Heart right ventricle (tissue), 16 donors: ENCODE measurements at regions of chr10 and their contacts with region 1.

Region 1: DNA sequence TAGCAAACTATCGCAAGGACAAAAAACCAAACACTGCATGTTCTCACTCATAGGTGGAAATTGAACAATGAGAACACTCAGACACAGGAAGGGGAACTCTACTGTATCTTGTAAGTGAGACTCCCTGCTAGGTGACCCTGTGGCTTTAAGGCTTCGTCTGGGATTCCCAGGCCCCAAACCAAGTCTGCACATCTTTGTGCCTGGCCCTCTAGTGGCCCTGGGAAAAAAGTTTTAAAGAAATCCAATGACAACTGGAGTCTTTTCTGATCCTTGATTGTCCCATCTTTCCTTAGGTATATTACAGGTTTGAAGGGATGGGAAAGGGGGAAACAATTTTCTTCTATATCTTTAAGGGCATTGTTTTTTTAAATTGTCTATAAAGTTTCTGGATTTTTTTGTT is 10.6 kb upstream of the LIPM start:
- DNase-seq: no peak
- ATAC-seq: no peak
- H3K4me3 ChIP-seq: no peak overlapping the region
- H3K27ac ChIP-seq: peak overlapping the region in 1 of 10 donors; percentile 57
- H3K4me1 ChIP-seq: peaks cover 0 to 25% (median 0%) of the 10 kb centered on the region in 9 donors
- H3K27me3 ChIP-seq: peaks cover 0 to 8% (median 0%) of the 10 kb centered on the region in 7 donors
- CTCF ChIP-seq: peak in 7 of 9 donors; percentile 32 to 52 (median 45)

Region 2: DNA sequence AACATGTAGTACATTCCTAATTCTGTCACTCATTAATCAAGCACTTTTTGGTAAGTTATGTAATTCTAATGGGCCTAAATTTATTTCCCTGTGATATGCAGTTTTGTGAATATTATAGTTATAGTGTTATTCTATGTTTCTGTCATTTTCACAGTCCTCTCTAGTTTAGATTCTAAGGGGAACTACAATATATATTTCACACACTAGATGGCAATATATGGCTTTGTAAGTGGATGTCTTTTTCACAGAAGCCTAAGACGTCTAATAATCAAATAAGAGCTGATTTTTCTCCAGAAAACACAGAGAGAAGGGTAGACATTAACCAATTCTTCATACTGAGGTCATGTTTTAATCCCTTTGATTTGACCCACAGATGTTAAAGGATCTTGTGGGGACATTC is 226.9 kb before region 1 on chr10:
- intact Hi-C with region 1: loop called in 1 of 10 experiments (anchors 10 kb)
- DNase-seq: no peak
- ATAC-seq: no peak
- H3K4me3 ChIP-seq: no peak overlapping the region
- H3K27ac ChIP-seq: no peak overlapping the region
- H3K4me1 ChIP-seq: no peaks in the 10 kb centered on the region
- H3K27me3 ChIP-seq: no peaks in the 10 kb centered on the region
- CTCF ChIP-seq: peak in 8 of 9 donors; percentile 5 to 57 (median 42)

Region 3: GRCh38 chr10:88582806-88583583 is 208.9 kb before region 1 on chr10 and contains the start of gene RNLS:
- intact Hi-C with region 1: loop called in 1 of 10 experiments (anchors 10 kb)
- DNase-seq: peak; percentile 61 to 80
- ATAC-seq: peak; percentile 95 to 98 (median 96)
- H3K4me3 ChIP-seq: peak within 1 kb of the TSS; percentile 60 to 81 (median 70)
- H3K27ac ChIP-seq: peak within 1 kb of the TSS; percentile 79 to 96 (median 94)
- H3K4me1 ChIP-seq: peaks cover 0 to 11% (median 7%) of the 10 kb centered on the region in 9 donors
- H3K27me3 ChIP-seq: no peaks in the 10 kb centered on the region
- CTCF ChIP-seq: peak; percentile 59 to 90 (median 85)
- total RNA-seq, gene RNLS: 9.7 to 22.2 (median 18.1) TPM

Region 4: GRCh38 chr10:88687853-88688467 is 104.0 kb before region 1 on chr10:
- intact Hi-C with region 1: loop called in 5 of 10 experiments (anchors 10 kb)
- DNase-seq: no peak
- ATAC-seq: no peak
- H3K4me3 ChIP-seq: no peak overlapping the region
- H3K27ac ChIP-seq: no peak overlapping the region
- H3K4me1 ChIP-seq: no peaks in the 10 kb centered on the region
- H3K27me3 ChIP-seq: peaks cover 0 to 14% (median 0%) of the 10 kb centered on the region in 7 donors
- CTCF ChIP-seq: peak; percentile 34 to 81 (median 65)

Region 5: GRCh38 chr10:88693392-88694020 is 98.4 kb before region 1 on chr10:
- intact Hi-C with region 1: loop called in 5 of 10 experiments (anchors 10 kb)
- DNase-seq: no peak
- ATAC-seq: no peak
- H3K4me3 ChIP-seq: no peak overlapping the region
- H3K27ac ChIP-seq: no peak overlapping the region
- H3K4me1 ChIP-seq: no peaks in the 10 kb centered on the region
- H3K27me3 ChIP-seq: peaks cover 0 to 12% (median 0%) of the 10 kb centered on the region in 7 donors
- CTCF ChIP-seq: peak in 2 of 9 donors; percentile 16 to 27